ENCODE measurements at regions of chr6 and their contacts with region 1.

Region 1: GRCh38 chr6:154675602-154676088 is 57.6 kb upstream of the SCAF8 start:
- DNase-seq: peak; percentile 91
- ATAC-seq: peak; percentile 100
- H3K4me3 Mint-ChIP-seq: no peak overlapping the region
- H3K27ac Mint-ChIP-seq: no peak overlapping the region
- H3K4me1 Mint-ChIP-seq: no peaks in the 10 kb centered on the region
- H3K27me3 Mint-ChIP-seq: no peaks in the 10 kb centered on the region

Region 2: GRCh38 chr6:154247119-154247861 is 428.4 kb before region 1 on chr6:
- CTCF ChIA-PET with region 1: no interaction called
- POLR2A ChIA-PET with region 1: no interaction called
- intact Hi-C with region 1: no loop called
- DNase-seq: peak; percentile 62
- ATAC-seq: peak; percentile 57
- H3K4me3 Mint-ChIP-seq: peak overlapping the region; percentile 79
- H3K27ac Mint-ChIP-seq: peak overlapping the region; percentile 89
- H3K4me1 Mint-ChIP-seq: peaks cover 80% of the 10 kb centered on the region
- H3K27me3 Mint-ChIP-seq: peaks cover 6% of the 10 kb centered on the region

Region 3: GRCh38 chr6:154689493-154690255 is 14.0 kb after region 1 on chr6:
- CTCF ChIA-PET with region 1: interaction called, 29 read pairs
- POLR2A ChIA-PET with region 1: no interaction called
- intact Hi-C with region 1: no loop called
- DNase-seq: no peak
- ATAC-seq: no peak
- H3K4me3 Mint-ChIP-seq: no peak overlapping the region
- H3K27ac Mint-ChIP-seq: no peak overlapping the region
- H3K4me1 Mint-ChIP-seq: no peaks in the 10 kb centered on the region
- H3K27me3 Mint-ChIP-seq: no peaks in the 10 kb centered on the region

Region 4: GRCh38 chr6:154733012-154733625 is 57.5 kb after region 1 on chr6 and contains the start of gene SCAF8:
- CTCF ChIA-PET with region 1: interaction called, 7 read pairs
- POLR2A ChIA-PET with region 1: no interaction called
- intact Hi-C with region 1: loop called (anchors 1 kb)
- DNase-seq: peak; percentile 90
- ATAC-seq: peak; percentile 78
- H3K4me3 Mint-ChIP-seq: peak within 1 kb of the TSS; percentile 86
- H3K27ac Mint-ChIP-seq: peak within 1 kb of the TSS; percentile 94
- H3K4me1 Mint-ChIP-seq: peaks cover 42% of the 10 kb centered on the region
- H3K27me3 Mint-ChIP-seq: no peaks in the 10 kb centered on the region
- total RNA-seq, gene SCAF8: 33.9 to 44.5 TPM

Region 5: DNA sequence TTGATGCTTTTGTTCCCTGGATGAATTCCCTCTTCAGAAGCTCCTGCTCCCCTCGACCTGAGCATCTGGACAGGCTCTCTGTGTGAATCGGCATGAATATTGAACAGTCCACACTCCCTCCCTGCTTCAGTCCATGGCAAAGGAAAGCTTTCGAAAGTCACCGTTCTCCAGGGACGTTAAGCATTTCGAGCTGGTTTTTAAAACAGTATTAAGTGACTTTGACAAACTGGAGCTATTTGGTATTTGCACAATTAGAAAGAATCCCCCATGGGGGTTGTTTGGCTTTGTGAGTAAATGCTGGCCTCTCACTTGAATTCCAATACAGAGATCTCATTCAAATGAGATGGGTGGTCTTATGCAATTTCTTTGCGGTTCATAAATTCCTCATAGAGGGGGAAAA is 234.2 kb after region 1 on chr6:
- CTCF ChIA-PET with region 1: interaction called, 4 read pairs
- POLR2A ChIA-PET with region 1: no interaction called
- intact Hi-C with region 1: loop called in 1 of 2 experiments (anchors 5 kb)
- DNase-seq: no peak
- ATAC-seq: no peak
- H3K4me3 Mint-ChIP-seq: no peak overlapping the region
- H3K27ac Mint-ChIP-seq: no peak overlapping the region
- H3K4me1 Mint-ChIP-seq: peaks cover 3% of the 10 kb centered on the region
- H3K27me3 Mint-ChIP-seq: no peaks in the 10 kb centered on the region